K562 (cell line): ENCODE measurements at regions of chr9 and their contacts with region 1.

Region 1: GRCh38 chr9:68999393-69000105 is 14.4 kb downstream of the PRKACG start:
- DNase-seq: peak; percentile 46 to 86 (median 64)
- ATAC-seq: peak; percentile 94
- H3K4me3 ChIP-seq: no peak overlapping the region
- H3K27ac ChIP-seq: peak overlapping the region; percentile 48
- H3K4me1 ChIP-seq: peaks cover 5 to 16% of the 10 kb centered on the region in 2 experiments; a peak in 4 of 5 replicates
- H3K27me3 ChIP-seq: no peaks in the 10 kb centered on the region
- CTCF ChIP-seq: peak; percentile 81 to 97 (median 94)
- EP300 ChIP-seq: no peak
- POLR2A ChIP-seq: no peak
- RAD21 ChIP-seq: peak; percentile 70 to 92

Region 2: GRCh38 chr9:68697851-68698250 is 301.7 kb before region 1 on chr9:
- CTCF ChIA-PET with region 1: no interaction called
- POLR2A ChIA-PET with region 1: no interaction called
- in situ Hi-C with region 1: no loop called
- intact Hi-C with region 1: loop called (anchors 2 kb)
- DNase-seq: peak in 1 of 4 experiments; percentile 27
- ATAC-seq: peak; percentile 55
- H3K4me3 ChIP-seq: no peak overlapping the region
- H3K27ac ChIP-seq: no peak overlapping the region
- H3K4me1 ChIP-seq: peaks cover 5 to 29% of the 10 kb centered on the region in 2 experiments
- H3K27me3 ChIP-seq: no peaks in the 10 kb centered on the region
- CTCF ChIP-seq: peak in 1 of 3 experiments; percentile 41; a peak in 2 of 6 replicates
- EP300 ChIP-seq: no peak
- POLR2A ChIP-seq: no peak
- RAD21 ChIP-seq: peak; percentile 15 to 53; a peak in 2 of 4 replicates

Region 3: GRCh38 chr9:68851657-68852056 is 147.9 kb before region 1 on chr9:
- CTCF ChIA-PET with region 1: interaction called, 3 read pairs
- POLR2A ChIA-PET with region 1: no interaction called
- in situ Hi-C with region 1: no loop called
- intact Hi-C with region 1: loop called (anchors 5 kb)
- DNase-seq: no peak
- ATAC-seq: 0 out of 3 replicates have a peak, but pooled peaks have one; percentile 33
- H3K4me3 ChIP-seq: no peak overlapping the region
- H3K27ac ChIP-seq: no peak overlapping the region
- H3K4me1 ChIP-seq: no peaks in the 10 kb centered on the region; a peak in 1 of 5 replicates
- H3K27me3 ChIP-seq: no peaks in the 10 kb centered on the region
- CTCF ChIP-seq: no peak
- EP300 ChIP-seq: no peak
- POLR2A ChIP-seq: no peak
- RAD21 ChIP-seq: no peak

Region 4: DNA sequence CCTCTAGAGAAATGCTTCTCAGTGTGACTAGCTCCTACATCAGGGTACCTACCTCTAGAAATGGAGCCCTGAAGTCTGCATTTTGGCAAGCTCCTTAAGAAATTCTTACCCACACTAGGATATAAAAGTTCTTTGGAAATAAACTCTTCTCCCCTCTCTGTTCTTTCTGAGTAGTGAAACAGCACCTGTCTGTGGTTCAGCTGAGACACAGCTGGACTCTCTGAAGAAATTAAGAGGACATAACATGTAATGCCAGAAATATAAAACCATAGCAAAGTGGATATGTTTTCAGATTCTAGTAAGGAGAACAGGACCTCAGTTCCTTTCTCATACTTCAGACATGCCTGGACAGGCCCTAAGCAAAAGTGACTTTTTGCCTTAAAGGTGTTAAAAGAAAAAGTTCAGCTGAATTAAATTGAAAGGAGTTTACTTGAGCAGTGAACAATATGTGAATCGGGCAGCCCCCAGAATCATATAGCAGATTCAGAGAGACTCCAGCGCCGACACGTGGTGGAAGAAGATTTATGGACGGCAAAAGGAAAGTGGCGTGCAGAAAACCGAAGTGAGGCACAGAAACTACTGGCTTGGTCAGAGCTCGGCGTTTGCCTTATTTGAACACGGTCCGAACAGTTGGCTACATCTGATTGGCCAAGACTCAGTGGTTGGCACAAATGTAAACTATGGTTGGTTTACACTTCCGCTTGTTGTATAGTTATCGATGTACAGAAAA is 50.1 kb before region 1 on chr9:
- CTCF ChIA-PET with region 1: no interaction called
- POLR2A ChIA-PET with region 1: no interaction called
- in situ Hi-C with region 1: no loop called
- intact Hi-C with region 1: loop called (anchors 5 kb)
- DNase-seq: no peak
- ATAC-seq: no peak
- H3K4me3 ChIP-seq: no peak overlapping the region
- H3K27ac ChIP-seq: no peak overlapping the region
- H3K4me1 ChIP-seq: peaks cover 0 to 3% of the 10 kb centered on the region in 2 experiments; a peak in 2 of 5 replicates
- H3K27me3 ChIP-seq: no peaks in the 10 kb centered on the region
- CTCF ChIP-seq: peak in 1 of 3 experiments; percentile 11; a peak in 1 of 6 replicates
- EP300 ChIP-seq: no peak
- POLR2A ChIP-seq: no peak
- RAD21 ChIP-seq: no peak

Region 5: DNA sequence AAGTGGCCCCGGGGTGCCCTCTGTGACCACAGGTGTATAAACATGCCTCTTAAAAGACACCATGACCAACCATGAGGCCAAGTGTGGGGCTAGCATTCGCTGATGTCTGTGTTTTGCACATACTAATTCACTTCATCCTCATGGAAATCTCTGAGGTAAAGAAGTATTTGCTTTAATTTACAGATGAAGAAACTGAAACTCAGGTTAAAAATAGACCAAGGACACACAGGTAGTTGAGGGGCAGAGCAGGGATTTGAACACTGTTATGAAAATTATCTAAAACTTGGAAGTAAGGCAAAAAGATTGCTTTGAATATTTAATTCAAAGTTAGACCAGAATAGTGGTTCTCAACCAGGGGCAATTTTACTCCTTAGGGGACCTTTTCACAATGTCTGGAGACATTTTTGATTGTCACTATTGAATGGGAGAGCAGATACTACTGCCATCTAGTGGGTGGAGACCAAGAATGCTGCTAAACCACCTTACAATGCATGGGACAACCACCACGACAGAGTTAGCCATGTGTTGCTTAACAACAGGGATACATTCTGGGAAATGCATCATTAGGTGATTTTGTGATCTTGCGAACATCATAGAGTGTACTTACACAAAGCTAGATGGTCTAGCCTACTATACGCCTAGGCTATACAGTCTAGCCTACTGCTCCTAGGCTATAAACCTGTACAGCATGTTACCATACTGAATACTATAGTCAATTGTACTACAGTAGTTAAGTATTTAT is 28.0 kb after region 1 on chr9:
- CTCF ChIA-PET with region 1: interaction called, 3 read pairs
- POLR2A ChIA-PET with region 1: interaction called, 5 read pairs
- in situ Hi-C with region 1: no loop called
- intact Hi-C with region 1: loop called (anchors 2 kb)
- DNase-seq: peak; percentile 44 to 78 (median 58)
- ATAC-seq: peak; percentile 92
- H3K4me3 ChIP-seq: no peak overlapping the region
- H3K27ac ChIP-seq: no peak overlapping the region; the same call in 2 of the 3 replicates
- H3K4me1 ChIP-seq: peaks cover 13 to 25% of the 10 kb centered on the region in 2 experiments; a peak in 4 of 5 replicates
- H3K27me3 ChIP-seq: no peaks in the 10 kb centered on the region
- CTCF ChIP-seq: peak; percentile 66 to 77 (median 69)
- EP300 ChIP-seq: no peak
- POLR2A ChIP-seq: no peak
- RAD21 ChIP-seq: peak; percentile 58 to 80

Region 6: DNA sequence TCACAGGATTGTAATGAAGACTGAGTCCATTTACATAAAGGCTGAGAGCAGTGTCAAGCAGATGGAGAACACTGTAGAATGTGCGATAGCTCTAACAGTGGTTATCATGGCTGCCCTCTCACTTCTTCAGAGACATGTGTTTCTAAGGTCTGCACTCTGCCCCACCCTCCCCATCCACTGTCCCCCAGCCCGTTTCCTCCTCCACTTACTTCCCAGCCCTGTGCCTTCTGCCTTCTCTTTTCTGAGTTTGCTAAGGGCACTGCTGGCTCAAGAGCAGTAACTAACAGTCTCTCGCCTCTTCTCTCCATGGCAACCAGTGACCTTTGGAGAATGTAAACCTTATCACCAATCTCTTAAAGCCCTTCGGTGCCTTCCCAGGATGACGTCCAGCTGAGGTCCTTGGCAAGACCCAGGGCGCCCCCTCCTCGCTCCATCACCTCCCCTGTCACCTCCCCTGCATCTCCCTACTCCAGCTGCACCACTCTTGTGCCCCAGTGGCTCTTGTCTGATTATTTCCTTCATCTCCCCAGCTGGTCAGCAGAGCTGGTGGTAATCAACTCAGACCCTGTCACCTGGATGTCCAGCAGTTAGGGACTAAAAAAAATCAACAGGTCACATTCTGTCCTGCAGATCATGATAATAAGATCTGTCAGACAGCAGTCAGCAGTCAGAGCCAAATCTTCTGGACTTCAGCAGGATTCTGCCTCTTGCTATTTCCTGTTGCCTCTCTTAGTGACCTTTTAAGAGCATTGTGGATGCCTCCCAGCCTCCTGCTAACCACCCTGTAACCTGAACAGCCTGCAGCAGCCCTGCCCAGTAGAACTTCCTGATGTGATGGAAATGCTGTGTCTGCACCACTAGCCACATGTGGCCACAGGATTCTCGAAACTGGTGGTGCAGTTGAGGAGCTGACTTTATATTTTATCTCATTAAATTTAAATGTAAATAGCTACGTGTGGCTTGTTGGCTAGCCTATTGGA is 45.0 kb after region 1 on chr9:
- CTCF ChIA-PET with region 1: no interaction called
- POLR2A ChIA-PET with region 1: no interaction called
- in situ Hi-C with region 1: no loop called
- intact Hi-C with region 1: no loop called
- DNase-seq: peak in 3 of 4 experiments; percentile 17 to 50 (median 22)
- ATAC-seq: peak; percentile 71
- H3K4me3 ChIP-seq: no peak overlapping the region
- H3K27ac ChIP-seq: no peak overlapping the region
- H3K4me1 ChIP-seq: peaks cover 8 to 11% of the 10 kb centered on the region in 2 experiments; a peak in 2 of 5 replicates
- H3K27me3 ChIP-seq: no peaks in the 10 kb centered on the region
- CTCF ChIP-seq: no peak
- EP300 ChIP-seq: no peak
- POLR2A ChIP-seq: no peak
- RAD21 ChIP-seq: no peak

Region 7: GRCh38 chr9:69056191-69056815 is 56.8 kb after region 1 on chr9:
- CTCF ChIA-PET with region 1: no interaction called
- POLR2A ChIA-PET with region 1: no interaction called
- in situ Hi-C with region 1: no loop called
- intact Hi-C with region 1: no loop called
- DNase-seq: no peak
- ATAC-seq: no peak
- H3K4me3 ChIP-seq: no peak overlapping the region
- H3K27ac ChIP-seq: no peak overlapping the region; the same call in 2 of the 3 replicates
- H3K4me1 ChIP-seq: no peaks in the 10 kb centered on the region; a peak in 1 of 5 replicates
- H3K27me3 ChIP-seq: no peaks in the 10 kb centered on the region
- CTCF ChIP-seq: no peak
- EP300 ChIP-seq: no peak
- POLR2A ChIP-seq: no peak
- RAD21 ChIP-seq: no peak